Naive thymus-derived CD4-positive, alpha-beta T cell (primary cell): ENCODE measurements at regions of chr16 and their contacts with region 1.

Region 1: DNA sequence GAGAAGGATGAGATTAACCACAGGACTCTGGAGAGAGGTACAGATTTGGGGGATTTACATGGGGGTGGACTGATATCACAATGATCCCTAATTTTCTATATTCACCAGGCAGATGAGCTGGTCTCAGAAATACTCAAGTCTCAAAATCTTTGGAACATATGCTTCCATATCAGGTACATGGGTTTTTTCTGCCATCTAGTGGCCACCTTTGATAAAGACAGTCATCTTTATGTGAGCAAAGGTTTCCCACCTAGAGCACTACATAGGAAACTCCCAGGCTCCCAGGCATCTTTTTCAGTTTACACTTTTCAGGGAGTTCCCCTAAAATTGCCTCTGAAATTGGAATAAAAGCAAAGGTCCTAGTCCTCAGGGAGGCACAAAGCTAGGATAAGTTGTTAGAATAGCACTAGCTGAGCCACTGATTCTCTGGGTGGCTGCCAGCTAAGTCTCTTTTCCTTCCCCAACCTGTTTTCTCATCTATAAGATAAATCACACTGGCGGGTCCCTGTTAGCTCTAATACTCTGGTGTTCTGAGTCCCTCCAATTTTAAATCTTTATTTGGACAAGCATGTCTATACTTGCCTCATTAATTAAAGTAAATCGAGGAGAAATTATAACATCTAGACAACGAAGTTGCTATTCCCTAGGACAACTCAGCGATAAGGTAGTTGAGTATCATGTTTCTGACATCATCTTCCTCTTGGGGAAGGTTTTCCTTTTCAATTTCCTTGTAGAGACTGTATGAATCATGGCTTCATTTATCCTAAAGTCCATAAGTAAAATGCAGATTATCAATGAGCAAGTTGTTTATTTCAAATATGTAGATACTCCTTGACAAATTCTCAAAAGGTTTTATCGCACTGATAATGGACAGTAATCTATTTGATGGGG is 19.0 kb upstream of the MON1B start:
- DNase-seq: peak in 6 of 9 donors; percentile 25 to 50 (median 40)
- ATAC-seq: peak; percentile 73
- H3K4me3 ChIP-seq: no peak overlapping the region
- H3K4me3 Mint-ChIP-seq: no peak overlapping the region
- H3K27ac ChIP-seq: no peak overlapping the region
- H3K27ac Mint-ChIP-seq: no peak overlapping the region
- H3K4me1 ChIP-seq: no peaks in the 10 kb centered on the region
- H3K4me1 Mint-ChIP-seq: no peaks in the 10 kb centered on the region
- H3K27me3 ChIP-seq: peaks cover 0 to 10% of the 10 kb centered on the region in 2 donors
- H3K27me3 Mint-ChIP-seq: peaks cover 17 to 56% (median 42%) of the 10 kb centered on the region in 5 donors

Region 2: DNA sequence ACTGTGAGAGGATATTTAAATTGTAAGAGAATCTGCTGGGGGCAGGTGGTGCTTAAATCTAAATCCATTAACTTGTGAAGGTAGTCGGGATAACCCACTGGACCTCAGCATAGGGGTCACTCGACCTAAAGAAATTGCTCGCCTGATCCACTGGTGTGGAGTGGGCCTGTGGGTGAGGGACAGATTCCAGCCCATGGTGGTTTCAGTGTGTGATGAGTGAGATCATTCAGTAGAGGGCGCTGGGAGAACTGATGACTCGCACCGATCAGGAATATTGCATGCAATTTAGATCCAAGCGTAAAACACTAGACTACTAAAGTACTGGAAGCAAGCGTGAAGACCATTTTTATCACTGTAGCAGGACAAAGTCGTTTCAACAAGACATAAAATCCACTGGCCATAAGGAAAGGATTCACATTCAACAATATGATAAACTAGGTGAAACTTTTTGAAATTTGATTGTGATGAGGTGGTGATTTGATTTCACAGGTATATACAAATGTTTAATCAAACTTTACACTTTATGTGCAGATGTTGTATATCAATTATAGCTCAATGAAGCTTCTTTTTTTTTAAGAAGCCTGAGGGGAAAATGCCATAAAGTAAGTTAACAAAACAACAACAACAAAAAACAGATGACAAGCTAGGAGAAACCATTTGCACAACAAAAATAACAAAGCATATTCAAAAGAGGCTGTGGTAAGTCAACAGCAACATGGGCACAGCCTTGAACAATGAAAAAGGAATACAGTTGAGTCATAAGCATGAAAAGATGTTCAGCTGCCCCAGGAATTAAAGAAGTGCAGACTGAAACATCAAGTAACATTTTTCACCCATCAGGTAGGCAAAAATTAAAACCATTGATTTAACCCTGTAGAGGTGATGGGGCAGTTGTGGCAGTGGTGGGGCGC is 1700.0 kb before region 1 on chr16:
- CTCF ChIA-PET with region 1: no interaction called
- POLR2A ChIA-PET with region 1: no interaction called
- intact Hi-C with region 1: loop called in 1 of 2 experiments (anchors 1 kb)
- DNase-seq: peak in 6 of 9 donors; percentile 15 to 48 (median 38)
- ATAC-seq: peak; percentile 91
- H3K4me3 ChIP-seq: no peak overlapping the region
- H3K4me3 Mint-ChIP-seq: no peak overlapping the region
- H3K27ac ChIP-seq: no peak overlapping the region
- H3K27ac Mint-ChIP-seq: peak overlapping the region in 1 of 9 donors; percentile 81
- H3K4me1 ChIP-seq: no peaks in the 10 kb centered on the region
- H3K4me1 Mint-ChIP-seq: peaks cover 0 to 6% (median 4%) of the 10 kb centered on the region in 7 donors
- H3K27me3 ChIP-seq: no peaks in the 10 kb centered on the region
- H3K27me3 Mint-ChIP-seq: peaks cover 0 to 5% (median 0%) of the 10 kb centered on the region in 5 donors

Region 3: GRCh38 chr16:75789237-75789636 is 1382.8 kb before region 1 on chr16:
- CTCF ChIA-PET with region 1: interaction called, 7 read pairs
- POLR2A ChIA-PET with region 1: no interaction called
- intact Hi-C with region 1: loop called (anchors 1 kb)
- DNase-seq: peak in 7 of 9 donors; percentile 5 to 48 (median 37)
- ATAC-seq: peak; percentile 66
- H3K4me3 ChIP-seq: no peak overlapping the region
- H3K4me3 Mint-ChIP-seq: no peak overlapping the region
- H3K27ac ChIP-seq: no peak overlapping the region
- H3K27ac Mint-ChIP-seq: no peak overlapping the region
- H3K4me1 ChIP-seq: no peaks in the 10 kb centered on the region
- H3K4me1 Mint-ChIP-seq: no peaks in the 10 kb centered on the region
- H3K27me3 ChIP-seq: no peaks in the 10 kb centered on the region
- H3K27me3 Mint-ChIP-seq: peaks cover 6 to 42% (median 22%) of the 10 kb centered on the region in 5 donors